ENCODE measurements at regions of chr14 and their contacts with region 1.

Region 1: DNA sequence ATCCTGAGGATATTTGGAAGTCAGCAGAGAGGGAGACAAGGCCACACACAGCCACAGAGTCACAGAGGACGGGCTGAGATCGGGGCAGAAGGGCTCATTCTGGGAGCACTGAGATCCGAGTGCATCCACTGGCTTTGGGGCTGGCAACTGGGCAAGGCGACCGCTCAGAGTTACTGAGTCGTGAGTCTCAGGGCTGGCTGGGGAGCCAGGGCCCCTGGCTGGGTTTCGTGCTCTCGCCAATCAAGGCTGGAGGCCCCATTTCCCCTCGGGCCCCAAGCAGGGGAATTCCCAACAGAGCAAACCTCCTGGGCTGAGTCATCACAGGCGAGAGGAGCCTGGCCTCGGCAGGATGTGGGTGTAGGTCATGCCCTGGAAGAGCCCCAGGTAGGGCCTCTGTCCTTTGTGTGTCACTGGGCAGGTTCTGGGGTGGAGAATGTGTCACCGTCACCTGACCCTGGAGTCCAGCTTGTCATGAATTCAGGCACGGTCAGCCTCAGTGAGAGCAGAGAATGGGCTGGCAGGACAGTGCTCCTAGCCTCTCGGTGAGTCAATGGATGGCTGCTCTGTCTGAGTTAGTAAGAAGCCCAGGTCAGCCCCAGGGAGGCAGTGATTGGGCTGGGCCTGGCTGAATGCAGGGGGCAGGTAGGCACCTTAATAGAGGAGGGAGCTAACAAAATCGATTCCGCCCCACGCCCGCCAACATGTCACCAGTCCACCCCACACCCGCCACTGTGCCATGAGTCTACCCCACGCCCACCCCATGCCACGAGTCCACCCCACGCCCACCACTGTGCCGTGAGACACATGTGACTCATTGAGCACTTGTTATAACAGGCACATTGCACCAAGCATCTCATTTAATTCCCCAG is 16.9 kb downstream of the ASB2 start:
- DNase-seq: peak; percentile 98
- ATAC-seq: peak; percentile 71
- H3K4me3 Mint-ChIP-seq: peak overlapping the region; percentile 67
- H3K27ac Mint-ChIP-seq: peak overlapping the region; percentile 99
- H3K4me1 Mint-ChIP-seq: peaks cover 93% of the 10 kb centered on the region
- H3K27me3 Mint-ChIP-seq: no peaks in the 10 kb centered on the region

Region 2: GRCh38 chr14:93970549-93970946 is 11.1 kb after region 1 on chr14:
- CTCF ChIA-PET with region 1: interaction called, 309 read pairs
- DNase-seq: peak; percentile 80
- ATAC-seq: peak; percentile 62
- H3K4me3 Mint-ChIP-seq: peak overlapping the region; percentile 83
- H3K27ac Mint-ChIP-seq: peak overlapping the region; percentile 97
- H3K4me1 Mint-ChIP-seq: peaks cover 90% of the 10 kb centered on the region
- H3K27me3 Mint-ChIP-seq: no peaks in the 10 kb centered on the region

Region 3: GRCh38 chr14:94080471-94081289 is 121.2 kb after region 1 on chr14 and contains the start of gene DDX24:
- CTCF ChIA-PET with region 1: no interaction called
- DNase-seq: peak; percentile 98
- ATAC-seq: peak; percentile 97
- H3K4me3 Mint-ChIP-seq: peak within 1 kb of the TSS; percentile 95
- H3K27ac Mint-ChIP-seq: peak within 1 kb of the TSS; percentile 98
- H3K4me1 Mint-ChIP-seq: peaks cover 58% of the 10 kb centered on the region
- H3K27me3 Mint-ChIP-seq: no peaks in the 10 kb centered on the region
- total RNA-seq, gene DDX24: 211 to 244 TPM